Activated T-helper 2 cell treated with anti-CD3 and anti-CD28 coated beads, Interferon-gamma antibody, Interleukin-2, Interleukin-4, amounts not matched to agents 10 μg/mL and 5 μg/mL and 100 μg/mL, durations not matched to agents 14 hours and 24 hours and 36 hours (primary cell): ENCODE measurements at regions of chr10 and their contacts with region 1.

Region 1: DNA sequence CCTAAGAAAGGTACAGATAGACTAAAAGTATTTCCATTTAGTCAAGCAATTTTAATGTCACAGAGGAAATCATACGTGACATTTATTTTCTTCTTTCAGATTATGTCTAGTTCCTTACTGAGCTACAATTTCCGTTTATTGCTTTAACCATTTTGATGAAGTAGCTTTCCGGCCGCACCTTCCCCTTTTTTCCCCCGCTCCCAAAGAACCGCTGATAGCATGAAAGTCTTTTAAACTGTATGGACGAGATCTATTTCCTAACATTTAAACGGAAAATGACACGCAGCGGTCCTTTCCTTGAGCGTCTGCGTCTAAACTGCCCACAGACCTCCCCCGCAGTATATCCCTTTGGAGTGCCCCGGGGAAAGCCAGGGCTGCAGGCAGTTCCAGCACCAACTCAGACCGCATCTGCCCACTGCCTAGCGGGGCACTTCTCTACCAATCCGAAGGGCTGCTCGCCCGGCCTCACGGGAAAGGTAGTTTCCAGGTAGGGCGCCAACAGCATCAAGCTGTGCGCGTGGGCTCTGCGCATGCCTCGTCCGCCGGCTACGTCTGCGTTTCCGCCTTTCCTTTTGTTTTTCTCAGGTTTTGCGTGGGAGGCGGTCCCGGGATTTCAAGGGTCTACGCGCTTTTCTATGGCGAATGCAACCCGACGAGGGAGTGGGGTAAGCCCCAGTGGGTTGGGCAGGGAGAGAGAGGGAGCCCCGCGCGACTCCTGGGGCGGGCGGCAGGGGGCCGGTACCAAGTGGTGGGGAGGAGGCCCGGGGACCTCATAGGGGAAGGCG is at the start of gene ZNF33A:
- DNase-seq: peak; percentile 86
- H3K4me3 Mint-ChIP-seq: peak within 1 kb of the TSS; percentile 90
- H3K27ac Mint-ChIP-seq: peak within 1 kb of the TSS; percentile 96
- H3K4me1 Mint-ChIP-seq: peaks cover 18% of the 10 kb centered on the region
- H3K27me3 Mint-ChIP-seq: no peaks in the 10 kb centered on the region
- total RNA-seq, gene ZNF33A: 19.5 and 20.3 TPM in 2 replicates

Region 2: GRCh38 chr10:37857287-37858211 is 152.8 kb before region 1 on chr10 and contains the start of gene ZNF248:
- intact Hi-C with region 1: loop called (anchors 1 kb)
- DNase-seq: peak; percentile 93
- H3K4me3 Mint-ChIP-seq: peak within 1 kb of the TSS; percentile 92
- H3K27ac Mint-ChIP-seq: peak within 1 kb of the TSS; percentile 94
- H3K4me1 Mint-ChIP-seq: peaks cover 25% of the 10 kb centered on the region
- H3K27me3 Mint-ChIP-seq: no peaks in the 10 kb centered on the region
- total RNA-seq, gene ZNF248: 9.2 and 11.2 TPM in 2 replicates

Region 3: GRCh38 chr10:37976091-37976879 is 34.0 kb before region 1 on chr10 and contains the start of gene ZNF25:
- intact Hi-C with region 1: loop called (anchors 1 kb)
- DNase-seq: peak; percentile 96
- H3K4me3 Mint-ChIP-seq: peak within 1 kb of the TSS; percentile 91
- H3K27ac Mint-ChIP-seq: peak within 1 kb of the TSS; percentile 97
- H3K4me1 Mint-ChIP-seq: peaks cover 19% of the 10 kb centered on the region
- H3K27me3 Mint-ChIP-seq: no peaks in the 10 kb centered on the region
- total RNA-seq, gene ZNF25: 7.2 and 9.0 TPM in 2 replicates

Region 4: GRCh38 chr10:37992083-37992482 is 18.2 kb before region 1 on chr10:
- intact Hi-C with region 1: loop called (anchors 2 kb)
- DNase-seq: no peak
- H3K4me3 Mint-ChIP-seq: no peak overlapping the region
- H3K27ac Mint-ChIP-seq: peak overlapping the region; percentile 2
- H3K4me1 Mint-ChIP-seq: peaks cover 13% of the 10 kb centered on the region
- H3K27me3 Mint-ChIP-seq: no peaks in the 10 kb centered on the region

Region 5: DNA sequence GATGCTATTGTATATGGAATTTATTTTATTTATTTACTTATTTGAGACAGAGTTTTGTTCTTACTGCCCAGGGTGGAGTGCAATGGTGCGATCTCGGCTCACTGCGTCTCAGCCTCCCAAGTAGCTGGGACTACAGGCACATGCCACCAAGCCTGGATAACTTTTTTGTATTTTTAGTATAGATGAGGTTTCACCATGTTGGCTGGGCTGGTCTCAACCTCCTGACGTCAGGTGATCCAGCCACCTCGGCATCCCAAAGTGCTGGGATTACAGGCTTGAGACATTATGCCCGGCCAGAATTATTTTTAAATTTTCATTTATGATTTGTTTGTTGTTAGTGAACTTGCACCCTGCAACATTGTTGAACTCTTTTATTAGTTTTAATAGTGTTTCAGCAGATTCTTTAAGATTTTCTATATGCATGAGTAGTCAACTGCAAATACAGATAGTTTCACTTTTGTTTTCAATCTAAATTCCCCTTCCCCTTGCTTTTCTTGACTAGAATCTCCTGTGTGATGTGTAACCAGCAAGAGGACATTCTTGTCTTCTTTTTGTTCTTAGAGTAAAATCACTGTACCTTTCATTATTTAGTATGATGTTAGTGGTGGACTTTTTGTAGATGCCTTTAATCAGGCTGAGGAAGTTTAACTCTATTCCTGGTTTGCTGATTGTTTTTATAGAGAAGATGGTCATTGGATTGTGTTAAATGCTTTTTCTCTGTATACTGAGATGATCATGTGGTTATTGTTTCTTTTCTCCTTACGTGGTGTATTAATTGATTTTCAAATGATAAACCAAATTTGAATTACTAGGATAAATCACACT is 28.0 kb after region 1 on chr10:
- intact Hi-C with region 1: loop called (anchors 2 kb)
- DNase-seq: no peak
- H3K4me3 Mint-ChIP-seq: peak overlapping the region; percentile 70
- H3K27ac Mint-ChIP-seq: peak overlapping the region; percentile 89
- H3K4me1 Mint-ChIP-seq: peaks cover 22% of the 10 kb centered on the region
- H3K27me3 Mint-ChIP-seq: no peaks in the 10 kb centered on the region

Region 6: GRCh38 chr10:38094158-38094920 is 84.0 kb after region 1 on chr10 and contains the start of gene ZNF37A:
- intact Hi-C with region 1: loop called (anchors 1 kb)
- DNase-seq: peak; percentile 86
- H3K4me3 Mint-ChIP-seq: peak within 1 kb of the TSS; percentile 91
- H3K27ac Mint-ChIP-seq: peak within 1 kb of the TSS; percentile 93
- H3K4me1 Mint-ChIP-seq: peaks cover 22% of the 10 kb centered on the region
- H3K27me3 Mint-ChIP-seq: no peaks in the 10 kb centered on the region
- total RNA-seq, gene ZNF37A: 29.7 and 31.9 TPM in 2 replicates